T-cell (primary cell): ENCODE measurements at regions of chr17 and their contacts with region 1.

Region 1: DNA sequence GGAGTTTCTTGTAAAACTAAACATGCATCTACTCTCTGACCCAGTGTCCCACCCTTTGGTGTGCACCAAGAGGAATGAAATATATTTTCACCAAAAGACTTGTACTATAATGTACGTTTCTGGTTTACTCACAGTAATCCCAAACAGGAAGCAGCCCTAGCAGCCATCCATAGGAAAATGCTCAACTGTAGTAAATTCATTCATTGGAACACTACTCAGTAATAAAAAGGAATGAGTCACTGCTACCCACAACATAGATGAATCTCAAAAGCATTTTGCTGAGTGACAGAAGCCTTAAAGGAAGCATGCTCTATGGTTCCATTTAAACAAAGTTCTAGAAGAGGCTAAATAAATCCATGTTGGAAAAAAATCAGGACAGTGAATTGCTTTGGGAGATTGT is 37.6 kb upstream of the DHRS7B start:
- DNase-seq: no peak
- ATAC-seq: no peak
- H3K4me3 ChIP-seq: no peak overlapping the region
- H3K4me3 Mint-ChIP-seq: no peak overlapping the region
- H3K27ac ChIP-seq: no peak overlapping the region
- H3K27ac Mint-ChIP-seq: no peak overlapping the region
- H3K4me1 ChIP-seq: no peaks in the 10 kb centered on the region
- H3K4me1 Mint-ChIP-seq: no peaks in the 10 kb centered on the region
- H3K27me3 ChIP-seq: peaks cover 0 to 9% of the 10 kb centered on the region in 2 experiments
- H3K27me3 Mint-ChIP-seq: peaks cover 4 to 9% of the 10 kb centered on the region in 2 donors

Region 2: GRCh38 chr17:20825539-20825938 is 263.6 kb before region 1 on chr17:
- CTCF ChIA-PET with region 1: no interaction called
- POLR2A ChIA-PET with region 1: no interaction called
- DNase-seq: no peak
- ATAC-seq: no peak
- H3K4me3 ChIP-seq: no peak overlapping the region
- H3K4me3 Mint-ChIP-seq: no peak overlapping the region
- H3K27ac ChIP-seq: no peak overlapping the region
- H3K27ac Mint-ChIP-seq: no peak overlapping the region
- H3K4me1 ChIP-seq: no peaks in the 10 kb centered on the region
- H3K4me1 Mint-ChIP-seq: no peaks in the 10 kb centered on the region
- H3K27me3 ChIP-seq: peaks cover 0 to 7% of the 10 kb centered on the region in 2 experiments
- H3K27me3 Mint-ChIP-seq: peaks cover 14 to 15% of the 10 kb centered on the region in 2 donors

Region 3: DNA sequence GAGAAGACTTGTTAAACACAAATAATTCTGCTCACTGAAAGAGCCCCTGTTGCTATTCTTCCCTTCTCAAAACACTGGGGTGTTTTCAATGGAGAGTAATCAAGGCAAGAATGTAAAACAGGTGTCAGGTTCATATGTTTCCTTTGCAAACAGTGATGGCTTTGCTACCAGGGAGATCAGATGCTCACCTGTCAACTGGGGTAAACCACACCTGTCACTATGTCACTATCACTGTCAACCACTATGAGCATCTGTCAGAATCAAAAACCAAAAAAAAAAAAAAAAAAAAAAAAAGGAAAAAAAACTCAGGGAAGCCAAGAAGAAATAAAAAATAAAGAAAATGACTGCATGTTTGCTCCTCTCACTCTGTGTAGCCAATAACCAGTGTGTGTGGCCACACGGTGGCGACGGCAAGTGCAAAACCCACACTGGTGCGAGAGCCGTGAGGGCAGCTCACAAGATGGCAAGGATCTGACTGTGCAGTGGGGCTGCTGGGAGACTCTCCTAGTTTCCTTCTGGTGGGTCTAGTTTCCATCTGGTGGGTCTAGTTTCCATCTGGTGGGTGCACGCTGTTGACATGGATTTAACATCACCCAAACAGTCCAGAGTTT is 69.1 kb before region 1 on chr17:
- CTCF ChIA-PET with region 1: no interaction called
- POLR2A ChIA-PET with region 1: interaction called in 1 of 2 experiments, 11 read pairs
- DNase-seq: peak in 28 of 35 experiments; percentile 22 to 58 (median 36)
- ATAC-seq: peak in 2 of 4 experiments; percentile 55 to 71
- H3K4me3 ChIP-seq: no peak overlapping the region
- H3K4me3 Mint-ChIP-seq: no peak overlapping the region
- H3K27ac ChIP-seq: no peak overlapping the region
- H3K27ac Mint-ChIP-seq: peak overlapping the region in 1 of 2 donors; percentile 24
- H3K4me1 ChIP-seq: peaks cover 6 to 19% of the 10 kb centered on the region in 2 experiments
- H3K4me1 Mint-ChIP-seq: peaks cover 32 to 43% (median 40%) of the 10 kb centered on the region in 3 donors
- H3K27me3 ChIP-seq: no peaks in the 10 kb centered on the region
- H3K27me3 Mint-ChIP-seq: no peaks in the 10 kb centered on the region

Region 4: GRCh38 chr17:21199299-21199698 is 110.2 kb after region 1 on chr17:
- CTCF ChIA-PET with region 1: no interaction called
- POLR2A ChIA-PET with region 1: no interaction called
- DNase-seq: no peak
- ATAC-seq: no peak
- H3K4me3 ChIP-seq: no peak overlapping the region
- H3K4me3 Mint-ChIP-seq: no peak overlapping the region
- H3K27ac ChIP-seq: no peak overlapping the region
- H3K27ac Mint-ChIP-seq: no peak overlapping the region
- H3K4me1 ChIP-seq: peaks cover 0 to 17% of the 10 kb centered on the region in 2 experiments
- H3K4me1 Mint-ChIP-seq: peaks cover 20 to 26% (median 26%) of the 10 kb centered on the region in 3 donors
- H3K27me3 ChIP-seq: no peaks in the 10 kb centered on the region
- H3K27me3 Mint-ChIP-seq: no peaks in the 10 kb centered on the region

Region 5: DNA sequence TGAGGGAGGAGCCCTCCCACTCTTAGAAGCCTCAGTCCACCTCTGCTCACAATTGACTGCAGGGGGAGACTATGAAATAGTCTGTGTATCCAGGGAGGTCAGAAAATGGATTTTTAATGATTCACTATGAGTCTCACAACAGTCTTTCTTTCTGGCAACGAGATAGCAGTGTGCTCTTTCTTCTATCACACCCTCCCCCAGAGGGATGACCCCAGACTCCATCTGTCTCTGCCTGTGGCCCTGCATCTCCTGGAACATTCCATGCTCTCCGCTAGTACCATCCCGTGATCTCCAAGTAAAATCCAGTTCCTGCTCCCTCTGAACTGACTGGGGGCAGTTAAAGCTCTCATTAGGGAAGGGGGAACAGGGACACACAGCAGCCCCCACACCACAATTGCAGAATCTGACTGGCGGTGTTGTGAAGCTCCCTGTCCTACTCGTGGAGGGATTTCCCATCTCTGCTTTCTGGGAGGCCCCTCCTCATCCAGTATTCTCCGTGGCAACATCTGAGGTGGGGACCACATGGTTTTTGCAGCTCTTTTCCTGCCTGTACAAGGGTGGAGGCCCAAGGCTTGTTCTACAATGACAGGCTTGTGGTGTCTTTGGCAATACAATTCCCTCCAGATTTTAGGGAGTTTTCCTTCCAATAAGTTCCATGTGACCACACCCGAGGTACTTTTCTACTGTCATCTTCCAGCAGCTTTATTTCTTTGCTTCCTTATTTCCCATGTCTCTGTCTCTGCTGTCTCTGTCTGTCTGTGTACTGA is 144.6 kb after region 1 on chr17:
- CTCF ChIA-PET with region 1: no interaction called
- POLR2A ChIA-PET with region 1: no interaction called
- DNase-seq: no peak
- ATAC-seq: no peak
- H3K4me3 ChIP-seq: no peak overlapping the region
- H3K4me3 Mint-ChIP-seq: no peak overlapping the region
- H3K27ac ChIP-seq: no peak overlapping the region
- H3K27ac Mint-ChIP-seq: no peak overlapping the region
- H3K4me1 ChIP-seq: no peaks in the 10 kb centered on the region
- H3K4me1 Mint-ChIP-seq: peaks cover 0 to 3% (median 0%) of the 10 kb centered on the region in 3 donors
- H3K27me3 ChIP-seq: no peaks in the 10 kb centered on the region
- H3K27me3 Mint-ChIP-seq: no peaks in the 10 kb centered on the region